BJ (cell line): ENCODE measurements at regions of chr1 and their contacts with region 1.

Region 1: DNA sequence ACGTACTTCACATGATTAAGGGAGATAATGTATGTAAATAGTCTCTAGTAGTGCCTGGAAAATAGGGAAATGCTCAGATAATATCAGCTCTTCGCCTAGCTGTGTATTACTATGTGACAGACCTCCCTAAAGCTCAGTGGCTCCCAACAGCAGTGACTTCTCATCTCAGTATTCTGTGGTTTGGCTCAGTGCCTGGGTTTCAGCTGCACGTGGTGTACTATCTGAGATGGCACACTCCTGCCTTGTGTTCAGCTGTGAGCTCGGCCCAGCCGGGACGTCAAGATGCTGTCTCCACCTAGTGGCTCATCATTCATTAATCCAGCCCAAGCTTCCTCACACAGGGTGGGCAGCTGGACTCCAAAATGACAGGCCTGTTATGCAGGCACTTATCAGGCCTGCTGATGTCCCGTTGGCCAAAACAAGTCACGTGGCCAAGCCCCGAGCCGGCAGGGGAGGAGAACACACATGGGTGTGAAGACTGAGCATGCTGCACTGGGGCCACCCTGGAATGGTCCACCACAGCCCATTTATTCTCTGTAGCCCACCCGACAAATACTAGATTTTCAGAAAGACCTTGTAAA is 17.8 kb downstream of the SLFNL1 start:
- DNase-seq: peak; percentile 93
- H3K4me3 ChIP-seq: no peak overlapping the region
- H3K27me3 ChIP-seq: no peaks in the 10 kb centered on the region
- CTCF ChIP-seq: peak; percentile 71

Region 2: DNA sequence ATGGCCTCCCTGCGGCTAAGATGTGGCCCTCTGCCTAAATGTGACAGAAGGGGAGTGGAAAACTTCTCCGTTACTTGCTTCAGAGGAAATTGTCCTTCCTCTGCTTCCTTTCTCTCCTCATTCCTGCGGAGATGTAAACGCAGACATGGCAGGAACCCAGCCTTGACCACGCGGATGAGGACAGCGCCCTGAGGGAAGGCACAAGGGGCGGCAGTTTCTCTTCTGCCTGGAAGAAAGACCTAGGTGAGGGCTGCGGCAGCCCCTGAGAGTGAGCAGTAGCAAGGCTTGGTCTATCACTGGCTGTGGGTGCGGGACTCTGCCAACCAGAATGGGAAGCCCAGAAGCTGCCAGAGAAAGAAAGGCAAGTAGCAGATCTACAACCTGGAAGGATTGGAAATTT is 38.2 kb before region 1 on chr1:
- CTCF ChIA-PET with region 1: interaction called, 11 read pairs
- POLR2A ChIA-PET with region 1: no interaction called
- DNase-seq: no peak
- H3K4me3 ChIP-seq: no peak overlapping the region
- H3K27me3 ChIP-seq: no peaks in the 10 kb centered on the region
- CTCF ChIP-seq: no peak

Region 3: DNA sequence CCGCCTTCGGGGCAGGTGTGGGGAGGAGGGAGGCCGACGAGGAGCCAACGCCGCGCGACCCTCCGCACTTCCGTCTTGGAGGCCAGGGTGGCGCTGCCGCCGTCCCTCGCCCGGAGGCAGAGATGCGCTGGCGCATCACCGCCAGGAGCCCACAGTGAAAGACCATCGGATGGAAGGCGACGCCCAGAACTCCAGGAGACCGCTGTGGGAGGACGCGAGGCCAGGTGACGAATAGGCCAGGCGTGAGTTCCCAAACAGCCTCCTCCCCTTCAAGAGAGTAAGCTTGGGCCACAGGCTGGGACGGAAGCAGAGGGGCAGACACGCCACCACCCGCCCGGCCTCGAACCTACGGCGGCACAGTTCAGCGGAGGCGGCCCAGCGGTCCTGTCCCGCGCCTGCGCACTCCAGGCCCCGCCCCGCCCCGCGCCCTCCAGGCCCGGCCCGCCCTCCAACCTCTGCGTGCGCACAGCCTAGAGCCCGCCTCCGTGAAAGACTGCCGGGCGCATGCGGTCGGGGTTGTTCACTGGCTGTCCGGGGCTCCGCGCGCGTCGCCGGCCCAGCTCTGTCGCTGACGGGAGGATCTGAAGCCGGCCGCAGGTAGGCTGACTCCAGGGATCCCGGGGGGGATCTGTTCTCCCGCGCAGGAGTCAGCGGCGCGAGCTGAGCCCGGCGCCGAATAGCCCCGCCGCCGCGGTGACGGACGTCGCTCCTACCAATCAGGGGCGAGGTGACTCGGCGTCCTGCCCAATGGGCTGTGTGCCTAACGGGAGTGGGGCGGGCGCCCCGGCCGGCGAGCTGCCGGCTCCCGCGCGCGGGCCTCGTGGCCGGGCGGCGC is 24.3 kb before region 1 on chr1 and contains the start of gene CTPS1:
- CTCF ChIA-PET with region 1: interaction called, 25 read pairs
- POLR2A ChIA-PET with region 1: no interaction called
- DNase-seq: peak; percentile 50
- H3K4me3 ChIP-seq: peak within 1 kb of the TSS; percentile 65
- H3K27me3 ChIP-seq: no peaks in the 10 kb centered on the region
- CTCF ChIP-seq: peak; percentile 37
- polyA plus RNA-seq, gene CTPS1: 45.1 and 53.0 TPM in 2 replicates

Region 4: GRCh38 chr1:41014871-41015270 is 11.1 kb after region 1 on chr1:
- CTCF ChIA-PET with region 1: interaction called, 11 read pairs
- POLR2A ChIA-PET with region 1: no interaction called
- DNase-seq: no peak
- H3K4me3 ChIP-seq: no peak overlapping the region
- H3K27me3 ChIP-seq: no peaks in the 10 kb centered on the region
- CTCF ChIP-seq: no peak